ENCODE measurements at regions of chr7 and their contacts with region 1.

Region 1: DNA sequence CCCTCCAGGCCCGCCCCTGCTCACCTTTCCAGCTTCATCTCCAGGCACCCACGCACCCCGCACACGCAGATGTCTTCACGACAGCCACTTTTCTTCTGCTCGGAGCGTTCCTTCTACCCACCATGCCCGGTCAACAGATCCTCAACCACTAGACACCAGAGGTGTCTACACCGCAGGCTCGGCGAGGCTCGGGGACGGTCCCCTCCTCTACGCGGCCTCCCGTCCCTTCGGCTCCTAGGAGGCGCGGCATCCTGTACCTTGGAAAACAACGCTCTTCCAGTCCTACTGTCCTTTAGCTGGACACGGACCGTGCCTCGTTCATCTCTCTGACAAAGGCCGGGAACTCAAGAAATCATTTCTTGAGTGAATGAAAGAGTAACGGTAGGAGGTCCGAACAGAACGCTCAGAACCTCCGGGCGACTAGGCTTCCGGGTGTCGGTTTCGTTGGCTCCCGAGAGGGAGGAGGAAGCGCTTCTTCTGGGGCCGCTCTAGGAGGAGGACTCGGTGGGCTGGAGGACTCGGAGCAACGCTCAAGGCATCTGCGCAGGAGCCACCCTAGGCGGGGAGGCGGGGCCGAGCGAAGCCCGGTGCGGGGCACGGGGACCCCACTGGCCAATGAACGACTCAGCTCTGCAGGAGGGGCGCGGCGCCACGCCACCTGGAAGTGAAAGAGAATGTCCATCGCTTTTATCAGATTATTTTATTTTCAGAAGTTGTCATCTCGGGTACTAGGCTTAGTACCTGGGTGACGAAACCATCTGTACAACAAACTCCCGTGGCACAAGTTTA is 7.2 kb upstream of the FIS1 start:
- DNase-seq: peak; percentile 99
- H3K4me3 Mint-ChIP-seq: peak overlapping the region; percentile 97
- H3K27ac Mint-ChIP-seq: peak overlapping the region; percentile 96
- H3K4me1 Mint-ChIP-seq: peaks cover 30% of the 10 kb centered on the region
- H3K27me3 Mint-ChIP-seq: no peaks in the 10 kb centered on the region

Region 2: GRCh38 chr7:101085162-101085987 is 166.7 kb before region 1 on chr7 and contains the start of gene TRIM56:
- CTCF ChIA-PET with region 1: no interaction called
- intact Hi-C with region 1: loop called (anchors 2 kb)
- DNase-seq: peak; percentile 85
- H3K4me3 Mint-ChIP-seq: peak within 1 kb of the TSS; percentile 99
- H3K27ac Mint-ChIP-seq: peak within 1 kb of the TSS; percentile 99
- H3K4me1 Mint-ChIP-seq: peaks cover 33% of the 10 kb centered on the region
- H3K27me3 Mint-ChIP-seq: no peaks in the 10 kb centered on the region
- total RNA-seq, gene TRIM56: 41.4 to 41.7 TPM

Region 3: GRCh38 chr7:101217388-101218235 is 34.5 kb before region 1 on chr7 and contains the starts of genes PLOD3 and ZNHIT1:
- CTCF ChIA-PET with region 1: no interaction called
- intact Hi-C with region 1: loop called (anchors 1 kb)
- DNase-seq: peak; percentile 98
- H3K4me3 Mint-ChIP-seq: peak within 1 kb of the TSS; percentile 89
- H3K27ac Mint-ChIP-seq: peak within 1 kb of the TSS; percentile 73
- H3K4me1 Mint-ChIP-seq: peaks cover 35% of the 10 kb centered on the region
- H3K27me3 Mint-ChIP-seq: no peaks in the 10 kb centered on the region
- total RNA-seq, gene PLOD3: 18.8 to 19.7 TPM
- total RNA-seq, gene ZNHIT1: 31.7 to 35.3 TPM

Region 4: GRCh38 chr7:101287032-101287431 is 35.0 kb after region 1 on chr7:
- CTCF ChIA-PET with region 1: interaction called, 12 read pairs
- intact Hi-C with region 1: no loop called
- DNase-seq: no peak
- H3K4me3 Mint-ChIP-seq: no peak overlapping the region
- H3K27ac Mint-ChIP-seq: no peak overlapping the region
- H3K4me1 Mint-ChIP-seq: peaks cover 6% of the 10 kb centered on the region
- H3K27me3 Mint-ChIP-seq: peaks cover 5% of the 10 kb centered on the region

Region 5: GRCh38 chr7:101321491-101322401 is 69.7 kb after region 1 on chr7 and contains the start of gene IFT22:
- CTCF ChIA-PET with region 1: no interaction called
- intact Hi-C with region 1: loop called (anchors 2 kb)
- DNase-seq: peak; percentile 92
- H3K4me3 Mint-ChIP-seq: peak within 1 kb of the TSS; percentile 86
- H3K27ac Mint-ChIP-seq: peak within 1 kb of the TSS; percentile 76
- H3K4me1 Mint-ChIP-seq: peaks cover 6% of the 10 kb centered on the region
- H3K27me3 Mint-ChIP-seq: no peaks in the 10 kb centered on the region
- total RNA-seq, gene IFT22: 5.4 to 6.8 TPM

Measured in activated naive CD4-positive, alpha-beta T cell treated with anti-CD3 and anti-CD28 coated beads for 36 hours (primary cell).